ENCODE measurements at regions of chr21 and their contacts with region 1.

Region 1: DNA sequence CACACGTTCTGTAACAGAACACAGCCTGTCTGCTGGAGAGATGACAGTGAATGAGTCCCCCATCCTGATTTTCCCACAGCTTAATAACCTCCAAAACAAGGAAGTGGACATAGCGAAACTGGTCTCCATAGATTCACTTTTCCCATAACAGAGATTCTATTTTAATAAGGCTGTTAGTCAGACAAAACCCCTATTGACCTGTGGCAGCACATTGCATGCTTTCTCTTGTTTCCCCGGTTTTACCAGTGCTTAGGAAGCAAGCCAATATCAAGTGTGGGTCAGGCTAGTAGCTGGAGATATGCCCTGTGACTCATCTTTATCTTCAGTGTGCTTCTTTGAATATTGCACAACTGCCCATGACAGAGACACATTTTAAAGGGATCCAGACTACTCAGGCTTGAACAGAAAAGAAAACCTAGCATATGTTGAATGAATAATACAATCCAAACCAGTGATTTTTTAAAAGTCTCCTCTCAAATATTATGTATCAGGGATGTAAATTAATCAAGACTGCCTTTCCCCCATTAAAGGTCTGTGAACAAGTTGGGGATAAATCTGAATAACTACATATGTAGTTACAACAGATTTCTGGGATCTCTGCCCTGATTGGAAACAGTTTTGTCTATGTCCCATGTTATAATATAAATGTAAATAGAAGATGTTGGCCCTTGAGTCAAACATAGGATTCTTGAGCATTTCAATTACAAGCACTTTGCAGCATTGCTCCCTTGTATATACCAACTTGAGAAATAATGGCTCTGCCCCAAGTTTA is 11.9 kb upstream of the CLDN8 start:
- DNase-seq: peak; percentile 68 to 97
- H3K4me3 ChIP-seq: peak overlapping the region; percentile 35; the same call in 1 of the 2 replicates
- H3K27ac ChIP-seq: peak overlapping the region; percentile 98
- H3K4me1 ChIP-seq: peaks cover 24% of the 10 kb centered on the region
- H3K27me3 ChIP-seq: no peaks in the 10 kb centered on the region
- CTCF ChIP-seq: no peak

Region 2: GRCh38 chr21:30146558-30147302 is 81.1 kb before region 1 on chr21:
- CTCF ChIA-PET with region 1: no interaction called
- POLR2A ChIA-PET with region 1: no interaction called
- intact Hi-C with region 1: loop called (anchors 1 kb)
- DNase-seq: peak; percentile 49 to 82
- H3K4me3 ChIP-seq: peak overlapping the region; percentile 44; the same call in 1 of the 2 replicates
- H3K27ac ChIP-seq: peak overlapping the region; percentile 91
- H3K4me1 ChIP-seq: peaks cover 14% of the 10 kb centered on the region
- H3K27me3 ChIP-seq: no peaks in the 10 kb centered on the region
- CTCF ChIP-seq: no peak

Region 3: DNA sequence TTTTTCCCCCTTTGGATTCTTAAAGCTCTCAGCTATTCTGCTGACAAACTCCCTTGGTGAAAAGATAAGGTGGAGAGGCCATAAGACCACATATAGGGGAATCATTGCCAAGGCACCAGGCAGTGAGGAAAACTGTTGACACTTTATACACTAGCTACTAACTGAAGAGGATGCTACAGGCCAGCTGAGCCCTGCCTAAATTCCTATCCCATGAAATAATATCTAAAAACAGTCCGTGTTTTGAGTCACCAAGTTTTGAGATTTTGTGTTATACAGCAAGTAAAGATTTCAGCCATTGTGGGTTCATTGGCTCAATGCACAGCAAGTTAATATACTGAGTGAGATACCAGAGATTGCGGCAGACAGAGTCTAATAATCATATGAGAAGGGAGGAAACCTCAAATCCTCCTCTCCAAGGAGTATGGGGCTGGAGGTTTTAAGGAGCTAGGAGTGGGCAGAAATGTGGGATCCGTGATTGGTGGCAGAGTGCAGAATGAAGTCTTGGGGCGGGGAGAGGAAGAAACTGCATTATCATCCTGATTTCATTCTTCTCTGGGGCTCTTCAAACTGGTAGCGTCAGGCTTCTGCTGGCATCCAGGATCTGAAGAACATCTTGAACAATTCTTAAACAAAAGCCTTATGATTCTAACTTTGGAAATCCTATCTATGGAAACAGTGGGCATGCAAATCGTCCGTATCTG is 21.1 kb before region 1 on chr21:
- CTCF ChIA-PET with region 1: no interaction called
- POLR2A ChIA-PET with region 1: interaction called, 4 read pairs
- intact Hi-C with region 1: loop called (anchors 1 kb)
- DNase-seq: peak; percentile 52 to 55
- H3K4me3 ChIP-seq: no peak overlapping the region
- H3K27ac ChIP-seq: peak overlapping the region; percentile 73
- H3K4me1 ChIP-seq: peaks cover 13% of the 10 kb centered on the region
- H3K27me3 ChIP-seq: no peaks in the 10 kb centered on the region
- CTCF ChIP-seq: no peak

Region 4: DNA sequence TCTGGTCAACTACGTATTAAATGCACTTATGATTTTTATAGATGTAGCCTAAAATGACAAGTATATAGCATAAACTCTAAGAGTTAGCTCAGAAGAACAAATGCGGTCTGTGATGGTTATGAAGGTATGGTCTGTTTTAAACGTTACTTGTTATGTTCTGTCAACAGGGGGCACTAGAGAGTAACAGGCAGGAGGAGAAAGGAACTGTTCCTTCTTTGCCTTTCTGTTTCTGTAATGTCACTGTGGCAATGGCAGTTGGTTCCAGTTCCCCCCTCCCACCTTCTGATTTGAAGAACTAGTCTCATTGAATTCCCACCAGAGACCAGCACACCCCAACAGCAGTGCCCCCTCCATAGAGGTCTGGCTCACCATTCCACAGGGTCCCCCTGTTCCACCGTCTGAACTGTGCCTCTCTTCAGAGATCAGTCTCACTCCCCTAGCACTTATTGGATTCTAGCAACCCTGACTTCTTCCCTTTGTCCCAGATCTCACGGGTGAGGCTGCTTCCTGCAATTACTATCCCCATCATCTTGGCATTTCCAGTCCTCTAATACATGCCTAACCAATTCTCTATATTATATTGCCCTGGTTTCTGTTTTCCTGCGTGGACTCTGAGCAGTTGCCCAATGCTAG is 40.9 kb after region 1 on chr21:
- CTCF ChIA-PET with region 1: no interaction called
- POLR2A ChIA-PET with region 1: no interaction called
- intact Hi-C with region 1: no loop called
- DNase-seq: no peak
- H3K4me3 ChIP-seq: no peak overlapping the region
- H3K27ac ChIP-seq: no peak overlapping the region
- H3K4me1 ChIP-seq: no peaks in the 10 kb centered on the region
- H3K27me3 ChIP-seq: no peaks in the 10 kb centered on the region
- CTCF ChIP-seq: peak; percentile 29; the same call in 1 of the 2 replicates

Region 5: GRCh38 chr21:30321726-30322125 is 93.9 kb after region 1 on chr21:
- CTCF ChIA-PET with region 1: no interaction called
- POLR2A ChIA-PET with region 1: no interaction called
- intact Hi-C with region 1: no loop called
- DNase-seq: no peak
- H3K4me3 ChIP-seq: no peak overlapping the region
- H3K27ac ChIP-seq: no peak overlapping the region
- H3K4me1 ChIP-seq: no peaks in the 10 kb centered on the region
- H3K27me3 ChIP-seq: no peaks in the 10 kb centered on the region
- CTCF ChIP-seq: no peak

Measured in PC-9 (cell line).